ENCODE measurements at regions of chr3 and their contacts with region 1.

Region 1: DNA sequence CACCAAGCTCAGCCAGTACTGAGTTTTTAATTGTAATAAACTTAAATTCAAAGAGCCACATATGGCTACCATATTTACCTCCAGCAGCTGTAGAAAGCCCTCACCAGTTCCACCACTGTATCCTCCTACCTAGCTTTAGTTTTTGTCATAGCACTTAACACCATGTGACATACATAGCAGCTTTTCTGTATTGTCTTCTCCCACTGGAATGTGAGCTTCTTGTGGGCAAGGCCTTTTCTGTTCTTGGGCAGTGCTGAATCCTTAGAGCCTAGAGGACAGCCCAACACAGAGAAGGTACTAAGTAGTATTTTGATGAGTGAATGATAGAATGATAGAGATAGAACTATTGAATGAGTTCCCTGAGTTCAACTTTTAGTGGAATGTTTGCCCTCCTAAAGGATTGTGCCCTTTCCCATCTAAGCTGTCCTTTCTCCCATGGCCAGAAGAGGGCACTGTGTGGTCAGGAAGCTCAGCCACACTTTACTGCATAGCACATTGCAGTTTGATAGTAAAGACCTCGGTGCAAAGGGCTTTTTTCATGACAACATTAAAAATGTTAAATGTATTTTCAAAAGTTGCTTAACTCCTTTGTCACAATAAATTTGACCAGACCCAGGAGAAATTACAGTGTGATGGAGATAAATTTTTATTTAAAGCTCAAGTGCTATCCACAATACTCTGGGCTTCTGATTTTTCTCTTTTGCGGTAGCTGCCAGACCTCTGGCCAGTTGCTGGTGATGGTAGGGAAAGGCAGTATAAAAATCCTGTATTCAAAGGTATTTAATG is 115.8 kb downstream of the GHSR start:
- DNase-seq: peak; percentile 22
- H3K4me3 Mint-ChIP-seq: no peak overlapping the region
- H3K27ac Mint-ChIP-seq: no peak overlapping the region
- H3K4me1 Mint-ChIP-seq: peaks cover 10% of the 10 kb centered on the region
- H3K27me3 Mint-ChIP-seq: no peaks in the 10 kb centered on the region

Region 2: GRCh38 chr3:171646357-171647133 is 685.9 kb before region 1 on chr3:
- intact Hi-C with region 1: loop called (anchors 10 kb)
- DNase-seq: no peak
- H3K4me3 Mint-ChIP-seq: no peak overlapping the region
- H3K27ac Mint-ChIP-seq: no peak overlapping the region
- H3K4me1 Mint-ChIP-seq: no peaks in the 10 kb centered on the region
- H3K27me3 Mint-ChIP-seq: peaks cover 3% of the 10 kb centered on the region

Region 3: GRCh38 chr3:172476347-172476746 is 143.9 kb after region 1 on chr3:
- intact Hi-C with region 1: loop called (anchors 5 kb)
- DNase-seq: no peak
- H3K4me3 Mint-ChIP-seq: peak overlapping the region; percentile 81
- H3K27ac Mint-ChIP-seq: no peak overlapping the region
- H3K4me1 Mint-ChIP-seq: peaks cover 18% of the 10 kb centered on the region
- H3K27me3 Mint-ChIP-seq: peaks cover 12% of the 10 kb centered on the region

Region 4: DNA sequence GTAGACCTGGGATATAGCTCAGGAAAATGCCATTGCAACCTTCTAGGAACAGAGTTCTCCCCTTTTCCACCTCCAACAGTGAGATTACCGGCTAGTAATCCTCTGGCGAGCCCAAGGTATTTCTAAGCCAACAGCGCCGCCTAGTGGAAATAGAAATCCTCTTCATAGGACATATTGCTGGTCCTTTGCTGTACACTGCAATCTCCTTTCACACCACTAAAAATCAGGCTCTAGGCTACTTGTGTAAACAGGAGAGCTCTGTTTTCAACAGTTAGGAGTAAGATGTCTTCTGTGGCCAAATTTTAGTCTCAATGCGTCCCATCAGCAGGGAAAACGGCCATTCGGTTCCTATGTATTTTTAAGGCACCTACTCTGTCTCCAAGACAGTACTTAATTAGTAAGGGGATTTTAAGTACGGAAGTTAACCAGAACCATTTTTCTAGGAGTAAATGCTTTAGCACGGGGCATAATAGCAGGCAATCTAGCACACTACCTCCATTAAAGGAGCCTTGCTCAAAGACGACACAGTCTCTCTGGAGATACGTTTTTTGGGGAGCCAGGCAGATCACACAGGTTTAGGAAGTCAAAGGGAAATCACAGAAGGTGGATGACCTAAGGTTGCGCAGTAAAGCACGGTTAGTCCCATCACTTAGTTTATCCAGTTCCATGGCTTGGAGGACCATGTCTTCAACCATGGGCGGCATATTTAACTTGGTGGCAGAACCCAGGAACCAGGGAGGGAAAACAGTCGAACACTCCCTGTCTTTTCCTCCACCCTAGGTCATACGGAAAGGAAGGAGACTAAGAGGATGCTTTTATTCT is 334.6 kb after region 1 on chr3:
- intact Hi-C with region 1: loop called (anchors 5 kb)
- DNase-seq: peak; percentile 66
- H3K4me3 Mint-ChIP-seq: no peak overlapping the region
- H3K27ac Mint-ChIP-seq: no peak overlapping the region
- H3K4me1 Mint-ChIP-seq: peaks cover 6% of the 10 kb centered on the region
- H3K27me3 Mint-ChIP-seq: peaks cover 14% of the 10 kb centered on the region

Region 5: DNA sequence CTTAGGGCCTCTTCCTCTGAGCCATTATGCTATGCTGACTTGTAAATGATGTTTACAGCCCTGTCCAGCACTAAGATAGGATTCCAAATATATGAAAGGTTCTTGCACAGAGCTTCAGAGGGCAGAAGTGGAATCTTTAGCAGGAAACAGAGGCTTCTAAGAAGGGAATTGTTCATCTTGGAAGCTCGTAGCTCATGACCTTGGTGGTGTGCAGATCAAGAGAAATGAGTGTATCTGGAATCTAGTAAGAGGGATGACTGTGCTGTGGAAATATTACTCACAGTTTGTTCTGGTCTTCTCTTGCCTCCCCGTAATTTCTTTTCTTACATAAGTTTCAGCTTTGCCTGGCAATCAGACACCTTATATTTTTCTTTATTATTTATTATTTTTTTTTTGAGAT is 632.8 kb after region 1 on chr3:
- intact Hi-C with region 1: no loop called
- DNase-seq: no peak
- H3K4me3 Mint-ChIP-seq: no peak overlapping the region
- H3K27ac Mint-ChIP-seq: no peak overlapping the region
- H3K4me1 Mint-ChIP-seq: no peaks in the 10 kb centered on the region
- H3K27me3 Mint-ChIP-seq: no peaks in the 10 kb centered on the region

Measured in activated T-helper 2 cell treated with anti-CD3 and anti-CD28 coated beads, Interferon-gamma antibody, Interleukin-2, Interleukin-4, amounts not matched to agents 10 μg/mL and 5 μg/mL and 100 μg/mL, durations not matched to agents 14 hours and 24 hours and 36 hours (primary cell).